ENCODE measurements at regions of chr3 and their contacts with region 1.

Region 1: DNA sequence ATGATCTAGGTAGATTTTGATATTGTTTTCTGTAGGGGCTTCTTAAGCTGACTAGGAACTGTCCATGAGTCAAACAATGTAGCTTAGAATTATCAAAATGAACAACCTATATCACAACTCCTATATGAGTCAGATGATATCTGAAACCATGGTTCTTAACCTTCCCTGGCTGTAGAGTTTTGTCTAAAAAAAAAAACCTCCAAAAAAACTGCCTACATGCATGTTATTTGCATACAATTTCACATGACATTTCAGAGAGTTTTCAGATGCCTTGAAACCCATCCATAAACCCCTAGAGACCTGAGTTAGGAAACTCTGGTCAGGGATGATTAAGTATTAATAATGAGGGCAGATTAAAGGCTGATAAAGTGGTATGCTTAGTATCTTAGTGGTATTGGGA is 157.0 kb downstream of the CHST2 start:
- DNase-seq: no peak
- ATAC-seq: no peak
- H3K4me3 ChIP-seq: no peak overlapping the region
- H3K4me3 Mint-ChIP-seq: peak overlapping the region; percentile 68
- H3K27ac ChIP-seq: no peak overlapping the region
- H3K27ac Mint-ChIP-seq: peak overlapping the region; percentile 17 to 62
- H3K4me1 ChIP-seq: peaks cover 49% of the 10 kb centered on the region
- H3K4me1 Mint-ChIP-seq: peaks cover 72 to 84% of the 10 kb centered on the region in 2 donors
- H3K27me3 ChIP-seq: no peaks in the 10 kb centered on the region
- H3K27me3 Mint-ChIP-seq: no peaks in the 10 kb centered on the region
- CTCF ChIP-seq: no peak

Region 2: DNA sequence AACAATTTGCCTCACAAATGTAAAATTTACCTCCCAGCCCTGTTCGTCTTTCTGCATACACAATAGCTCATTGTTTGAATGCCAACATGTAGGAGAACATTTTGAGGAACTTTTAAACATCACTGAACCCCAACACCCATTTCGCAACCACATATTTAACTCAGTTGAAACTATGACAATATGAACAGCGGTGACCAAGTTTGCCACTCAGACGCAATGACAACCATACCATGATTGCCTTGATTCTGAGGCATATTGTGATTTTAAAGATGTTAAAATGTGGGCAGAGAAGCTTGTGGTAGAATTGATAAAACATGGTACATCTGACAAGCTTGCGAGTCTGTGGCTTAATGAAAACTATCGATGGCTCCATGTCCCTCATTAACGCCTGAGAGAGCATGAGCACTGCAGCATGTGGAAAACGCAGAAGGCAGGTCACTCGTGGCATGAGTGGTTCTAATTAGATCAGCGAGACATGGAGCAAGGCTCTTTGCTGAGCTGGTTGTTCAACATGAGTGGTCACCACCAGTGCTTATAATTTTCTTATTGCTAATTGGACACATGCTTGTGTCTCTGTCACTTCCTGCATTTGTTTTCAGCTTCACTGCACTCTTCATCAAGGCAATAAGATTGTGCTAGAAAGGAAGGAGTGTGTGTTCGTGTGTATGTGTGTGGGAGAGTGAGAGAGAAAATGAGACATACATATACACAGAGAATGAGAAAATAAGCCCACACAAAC is 40.2 kb before region 1 on chr3:
- intact Hi-C with region 1: loop called (anchors 2 kb)
- DNase-seq: no peak
- ATAC-seq: peak; percentile 54 to 66 (median 58)
- H3K4me3 ChIP-seq: no peak overlapping the region
- H3K4me3 Mint-ChIP-seq: peak overlapping the region; percentile 64
- H3K27ac ChIP-seq: peak overlapping the region; percentile 88
- H3K27ac Mint-ChIP-seq: peak overlapping the region; percentile 92 to 98
- H3K4me1 ChIP-seq: peaks cover 40% of the 10 kb centered on the region
- H3K4me1 Mint-ChIP-seq: peaks cover 72 to 78% of the 10 kb centered on the region in 2 donors
- H3K27me3 ChIP-seq: no peaks in the 10 kb centered on the region
- H3K27me3 Mint-ChIP-seq: no peaks in the 10 kb centered on the region
- CTCF ChIP-seq: no peak

Region 3: DNA sequence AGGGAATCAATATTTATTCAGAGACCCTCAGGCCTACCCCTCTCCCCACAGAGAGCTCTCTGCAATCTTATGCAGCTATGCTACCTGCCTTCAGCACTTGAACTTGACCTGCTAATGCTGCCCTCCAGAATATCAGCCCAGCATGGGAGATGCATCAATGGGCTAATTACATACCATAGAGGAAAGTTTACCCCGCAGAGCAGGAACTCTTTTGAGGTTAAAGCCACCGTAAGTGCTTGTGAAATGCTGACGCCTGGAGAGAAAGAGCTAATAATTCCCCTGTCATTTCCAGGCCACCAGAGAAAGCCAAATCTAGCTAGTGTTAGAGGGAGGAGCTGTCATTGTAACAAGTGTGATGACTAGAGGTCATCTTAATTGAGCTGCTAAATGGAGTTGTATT is 29.5 kb before region 1 on chr3:
- intact Hi-C with region 1: loop called (anchors 1 kb)
- DNase-seq: peak in 1 of 2 donors; percentile 9
- ATAC-seq: peak; percentile 89 to 96 (median 93)
- H3K4me3 ChIP-seq: no peak overlapping the region
- H3K4me3 Mint-ChIP-seq: peak overlapping the region; percentile 78
- H3K27ac ChIP-seq: peak overlapping the region; percentile 75
- H3K27ac Mint-ChIP-seq: peak overlapping the region; percentile 80 to 88
- H3K4me1 ChIP-seq: peaks cover 26% of the 10 kb centered on the region
- H3K4me1 Mint-ChIP-seq: peaks cover 70 to 71% of the 10 kb centered on the region in 2 donors
- H3K27me3 ChIP-seq: no peaks in the 10 kb centered on the region
- H3K27me3 Mint-ChIP-seq: no peaks in the 10 kb centered on the region
- CTCF ChIP-seq: no peak